B cell (primary cell): ENCODE measurements at regions of chr11 and their contacts with region 1.

Region 1: DNA sequence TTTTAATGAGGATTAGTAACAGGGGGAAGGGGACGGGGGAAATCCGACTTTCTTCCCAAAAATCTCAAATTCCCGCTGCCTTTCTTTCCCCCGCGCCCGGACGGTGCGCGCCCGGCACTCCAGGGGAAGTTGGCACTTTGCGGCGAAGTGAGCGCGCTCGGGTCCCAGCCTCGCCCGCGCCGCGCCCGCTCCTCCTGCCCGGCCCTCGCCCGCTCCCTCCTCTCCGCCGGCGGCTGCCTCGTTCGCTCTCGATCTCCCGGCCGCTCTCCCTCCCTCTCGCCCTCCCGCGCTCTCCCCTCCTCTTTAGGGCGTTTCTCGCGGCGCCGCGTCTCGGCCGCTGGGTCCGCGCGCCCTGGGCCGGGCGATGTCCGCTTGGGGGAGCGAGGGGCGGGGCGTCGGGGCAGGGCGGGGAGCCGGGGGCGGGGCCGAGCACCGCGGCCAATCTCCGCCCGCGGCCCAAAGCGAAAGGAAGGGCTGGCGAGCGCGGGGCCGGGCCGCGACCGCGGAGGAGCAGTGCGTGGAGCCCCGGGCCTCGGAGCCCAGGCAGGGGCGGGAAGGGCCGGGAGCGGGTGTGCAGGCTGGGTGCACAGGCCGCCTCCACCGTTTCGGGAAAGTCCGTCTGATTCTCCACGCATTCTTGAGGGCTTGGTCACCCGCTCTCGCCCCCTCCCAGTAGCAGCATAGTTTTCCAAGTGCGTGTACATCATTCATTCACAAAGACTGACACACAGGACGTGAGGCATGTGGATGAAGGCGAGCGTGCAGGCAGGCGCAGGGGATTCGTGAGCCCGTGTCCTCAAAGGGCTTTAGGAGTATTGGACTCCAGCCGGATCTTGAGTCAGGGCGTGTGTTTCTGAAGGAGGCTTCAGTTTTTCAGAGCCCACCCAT is 65.1 kb downstream of the ETS1 start:
- DNase-seq: peak; percentile 92
- ATAC-seq: peak; percentile 91
- H3K4me3 ChIP-seq: peak overlapping the region; percentile 79 to 98 (median 90)
- H3K4me3 Mint-ChIP-seq: peak overlapping the region; percentile 92
- H3K27ac ChIP-seq: peak overlapping the region; percentile 82 to 90
- H3K27ac Mint-ChIP-seq: peak overlapping the region; percentile 98
- H3K4me1 ChIP-seq: peaks cover 31 to 34% of the 10 kb centered on the region in 2 donors
- H3K4me1 Mint-ChIP-seq: peaks cover 61% of the 10 kb centered on the region
- H3K27me3 ChIP-seq: no peaks in the 10 kb centered on the region
- H3K27me3 Mint-ChIP-seq: no peaks in the 10 kb centered on the region
- CTCF ChIP-seq: no peak

Region 2: DNA sequence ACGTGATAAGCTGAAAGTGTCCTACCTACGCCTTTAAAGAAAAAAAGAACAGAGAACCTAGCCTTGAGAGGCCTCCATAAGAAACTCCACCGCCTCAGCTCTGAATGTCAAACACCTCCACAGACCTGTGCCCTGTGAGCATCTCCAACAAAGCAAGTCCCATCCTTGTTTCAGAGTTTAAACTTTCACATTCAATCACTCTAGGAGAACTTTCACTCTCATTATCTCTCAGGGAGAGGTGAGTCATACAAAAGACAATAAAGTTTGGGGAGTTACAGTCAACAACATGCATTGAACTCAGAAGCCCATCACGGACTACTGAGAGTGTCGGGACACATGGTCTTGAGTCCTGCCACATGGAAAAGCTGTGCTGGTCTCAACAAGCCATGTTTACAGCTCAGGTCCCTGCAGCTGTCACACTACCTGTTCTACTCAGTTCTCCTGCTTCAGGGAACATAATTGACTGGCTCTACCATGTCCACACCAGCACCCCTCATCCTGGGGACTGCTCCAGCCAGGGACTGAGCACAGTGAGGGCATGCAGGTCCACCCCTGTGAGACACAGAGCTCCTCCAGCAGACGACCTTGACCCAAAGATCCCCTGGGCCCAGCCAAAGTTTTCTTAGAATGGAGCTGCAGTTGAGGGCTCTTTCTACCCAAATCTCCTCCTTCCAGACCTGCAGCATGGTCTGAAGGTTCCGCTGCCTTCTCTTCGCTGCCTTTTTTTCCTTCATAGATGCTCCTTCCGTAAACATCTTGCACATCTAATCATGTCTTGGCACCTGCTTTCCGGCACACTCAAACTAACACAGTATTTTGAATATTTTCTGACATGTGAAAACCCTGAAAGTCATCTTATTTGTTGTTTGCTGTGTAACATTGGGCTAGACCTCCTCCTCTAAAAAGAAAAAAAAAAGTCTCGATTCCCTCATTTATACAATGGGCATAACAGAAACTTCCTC is 49.9 kb before region 1 on chr11:
- CTCF ChIA-PET with region 1: interaction called, 51 read pairs
- POLR2A ChIA-PET with region 1: interaction called, 29 read pairs
- intact Hi-C with region 1: loop called (anchors 2 kb)
- DNase-seq: peak; percentile 57
- ATAC-seq: peak; percentile 9
- H3K4me3 ChIP-seq: peak overlapping the region in 2 of 5 experiments; percentile 15 to 54
- H3K4me3 Mint-ChIP-seq: peak overlapping the region; percentile 71
- H3K27ac ChIP-seq: peak overlapping the region; percentile 74 to 90
- H3K27ac Mint-ChIP-seq: peak overlapping the region; percentile 89
- H3K4me1 ChIP-seq: peaks cover 98 to 100% of the 10 kb centered on the region in 2 donors
- H3K4me1 Mint-ChIP-seq: peaks cover 97% of the 10 kb centered on the region
- H3K27me3 ChIP-seq: no peaks in the 10 kb centered on the region
- H3K27me3 Mint-ChIP-seq: no peaks in the 10 kb centered on the region
- CTCF ChIP-seq: no peak

Region 3: DNA sequence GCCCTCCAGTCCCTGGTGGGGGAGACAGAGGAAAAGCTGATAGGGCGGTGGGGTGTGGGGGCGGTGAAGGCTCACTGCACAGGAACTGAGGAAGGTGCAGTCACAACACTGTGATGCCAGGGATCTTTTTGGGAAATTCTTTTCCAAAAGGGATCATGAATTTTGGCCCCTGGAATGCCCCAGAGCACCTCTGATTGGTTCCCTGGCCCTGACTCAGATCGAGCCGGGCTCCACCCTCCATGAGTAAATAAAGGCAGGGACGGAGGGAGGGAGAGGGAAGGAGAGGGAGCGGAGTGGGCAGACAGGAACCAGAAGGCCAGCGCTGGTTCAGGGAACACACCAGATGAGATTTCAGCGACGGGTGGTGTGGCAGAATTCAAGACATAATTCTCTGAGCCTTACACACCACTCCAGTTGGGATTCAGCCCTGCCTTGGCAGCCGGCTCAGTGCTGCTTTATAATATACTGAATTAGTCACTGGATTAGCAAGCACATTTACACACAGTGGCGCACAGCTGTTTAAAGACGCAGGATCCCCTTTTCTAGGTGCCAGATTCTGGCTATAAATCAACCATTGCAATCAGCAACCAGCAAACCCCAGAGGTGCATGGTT is 15.2 kb before region 1 on chr11:
- CTCF ChIA-PET with region 1: interaction called, 12 read pairs
- POLR2A ChIA-PET with region 1: interaction called, 4 read pairs
- intact Hi-C with region 1: loop called (anchors 1 kb)
- DNase-seq: peak; percentile 39
- ATAC-seq: peak; percentile 54
- H3K4me3 ChIP-seq: peak overlapping the region in 4 of 5 experiments; percentile 8 to 41 (median 30)
- H3K4me3 Mint-ChIP-seq: peak overlapping the region; percentile 82
- H3K27ac ChIP-seq: peak overlapping the region; percentile 25 to 82
- H3K27ac Mint-ChIP-seq: peak overlapping the region; percentile 86
- H3K4me1 ChIP-seq: peaks cover 100% of the 10 kb centered on the region in 2 donors
- H3K4me1 Mint-ChIP-seq: peaks cover 98% of the 10 kb centered on the region
- H3K27me3 ChIP-seq: no peaks in the 10 kb centered on the region
- H3K27me3 Mint-ChIP-seq: no peaks in the 10 kb centered on the region
- CTCF ChIP-seq: no peak

Region 4: GRCh38 chr11:128565881-128566280 is 43.6 kb after region 1 on chr11:
- CTCF ChIA-PET with region 1: no interaction called
- POLR2A ChIA-PET with region 1: interaction called, 7 read pairs
- intact Hi-C with region 1: loop called (anchors 1 kb)
- DNase-seq: no peak
- ATAC-seq: no peak
- H3K4me3 ChIP-seq: no peak overlapping the region
- H3K4me3 Mint-ChIP-seq: no peak overlapping the region
- H3K27ac ChIP-seq: peak overlapping the region in 1 of 2 donors; percentile 33
- H3K27ac Mint-ChIP-seq: peak overlapping the region; percentile 65
- H3K4me1 ChIP-seq: peaks cover 50 to 57% of the 10 kb centered on the region in 2 donors
- H3K4me1 Mint-ChIP-seq: peaks cover 67% of the 10 kb centered on the region
- H3K27me3 ChIP-seq: no peaks in the 10 kb centered on the region
- H3K27me3 Mint-ChIP-seq: no peaks in the 10 kb centered on the region
- CTCF ChIP-seq: no peak

Region 5: DNA sequence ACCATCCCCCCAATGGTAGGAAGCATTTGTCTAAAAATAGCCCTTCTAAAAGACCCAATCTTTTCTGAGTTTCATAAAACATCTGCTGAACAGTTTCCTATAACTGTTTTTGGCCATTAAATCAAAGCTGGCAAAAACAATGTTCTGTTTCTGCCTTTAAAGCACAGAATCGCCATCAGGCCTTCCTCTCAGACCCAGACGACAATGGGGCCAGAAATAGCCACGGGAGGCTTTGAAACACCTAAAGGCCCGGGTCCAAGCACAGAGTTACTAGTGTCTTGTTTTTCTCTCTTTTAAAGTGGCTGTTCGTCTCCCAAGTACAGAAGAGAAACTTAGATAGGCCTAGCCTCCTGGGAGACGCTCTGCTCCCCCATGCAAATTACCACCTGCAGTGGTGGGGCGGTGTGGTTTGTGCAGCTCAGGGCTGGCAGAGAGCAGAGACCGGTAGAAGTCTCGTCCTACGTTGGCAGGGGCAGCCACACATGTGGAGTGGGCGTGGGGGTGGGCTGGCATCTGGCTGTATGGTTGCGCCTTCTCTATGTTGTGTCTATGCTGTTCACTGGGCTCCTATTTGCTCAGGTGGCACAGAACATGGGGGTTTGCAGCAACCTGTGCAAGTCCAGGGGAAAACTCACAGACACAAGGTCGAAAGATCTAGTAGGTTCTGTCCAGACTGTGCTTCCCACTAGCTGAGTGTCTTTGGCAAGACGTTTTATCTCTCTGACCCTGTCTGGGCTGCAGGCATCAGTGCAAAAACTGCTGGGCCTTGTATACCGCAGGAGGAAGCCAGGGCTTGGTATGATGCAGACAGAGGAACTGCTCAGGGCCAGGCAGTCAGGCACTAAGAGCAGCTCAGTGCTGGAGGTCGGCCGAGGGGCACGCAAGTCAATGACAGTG is 88.7 kb after region 1 on chr11:
- CTCF ChIA-PET with region 1: interaction called, 6 read pairs
- POLR2A ChIA-PET with region 1: interaction called, 10 read pairs
- intact Hi-C with region 1: loop called (anchors 1 kb)
- DNase-seq: peak; percentile 95
- ATAC-seq: peak; percentile 89
- H3K4me3 ChIP-seq: peak overlapping the region in 3 of 5 experiments; percentile 20 to 61 (median 29)
- H3K4me3 Mint-ChIP-seq: peak overlapping the region; percentile 58
- H3K27ac ChIP-seq: peak overlapping the region; percentile 93 to 95
- H3K27ac Mint-ChIP-seq: peak overlapping the region; percentile 93
- H3K4me1 ChIP-seq: peaks cover 85 to 87% of the 10 kb centered on the region in 2 donors
- H3K4me1 Mint-ChIP-seq: peaks cover 89% of the 10 kb centered on the region
- H3K27me3 ChIP-seq: no peaks in the 10 kb centered on the region
- H3K27me3 Mint-ChIP-seq: no peaks in the 10 kb centered on the region
- CTCF ChIP-seq: no peak